Heart right ventricle (tissue), 16 donors: ENCODE measurements at regions of chr15 and their contacts with region 1.

Region 1: DNA sequence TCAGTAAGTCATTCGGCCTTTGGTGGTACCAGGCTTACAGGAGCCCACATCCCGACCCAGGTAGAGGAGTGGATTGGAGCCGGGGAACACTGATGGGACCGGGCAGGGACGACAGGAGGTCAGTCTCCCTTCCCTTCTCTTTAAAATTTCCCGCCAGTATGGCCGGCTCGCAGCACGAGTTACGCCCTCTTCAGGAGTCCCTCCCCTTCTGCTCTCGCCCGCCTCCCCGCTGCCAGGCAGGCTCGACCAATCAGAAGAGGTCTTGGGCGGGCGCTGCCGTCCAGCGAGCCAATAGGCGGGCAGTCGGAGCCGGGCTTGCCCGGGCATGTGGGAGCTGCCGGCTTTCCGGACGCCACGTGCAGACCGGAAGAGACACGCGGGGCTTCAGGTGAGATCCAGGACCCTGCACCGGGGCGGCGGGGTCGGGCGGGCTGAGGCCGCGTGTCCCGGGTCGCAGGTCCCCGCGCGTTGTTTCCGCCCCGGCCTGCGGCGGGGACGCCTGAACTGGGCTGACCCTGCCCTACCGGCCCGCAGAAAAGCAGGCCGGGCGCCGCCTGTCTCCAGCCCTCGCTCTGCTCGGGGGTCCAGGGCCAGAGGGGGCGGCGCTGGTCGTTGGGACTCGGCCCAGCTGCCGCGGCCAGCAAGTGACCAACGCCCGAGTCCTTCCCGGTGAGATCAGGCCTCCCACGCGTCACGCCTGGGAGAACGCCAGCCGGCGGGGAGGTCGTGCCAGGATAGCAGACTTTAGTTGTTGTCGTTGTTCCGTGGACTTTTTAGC is at the start of gene AEN:
- DNase-seq: peak; percentile 95 to 96
- ATAC-seq: peak; percentile 97 to 99 (median 99)
- H3K4me3 ChIP-seq: peak within 1 kb of the TSS; percentile 52 to 96 (median 82)
- H3K27ac ChIP-seq: peak within 1 kb of the TSS; percentile 79 to 94 (median 92)
- H3K4me1 ChIP-seq: peaks cover 6 to 51% (median 36%) of the 10 kb centered on the region in 9 donors
- H3K27me3 ChIP-seq: no peaks in the 10 kb centered on the region
- CTCF ChIP-seq: peak in 5 of 9 donors; percentile 18 to 59 (median 31)
- total RNA-seq, gene AEN: 4.0 to 9.5 (median 5.6) TPM

Region 2: GRCh38 chr15:88401996-88402656 is 219.1 kb before region 1 on chr15:
- intact Hi-C with region 1: no loop called
- DNase-seq: peak; percentile 62 to 64
- ATAC-seq: peak; percentile 60 to 92 (median 80)
- H3K4me3 ChIP-seq: no peak overlapping the region
- H3K27ac ChIP-seq: peak overlapping the region in 9 of 10 donors; percentile 41 to 86 (median 71)
- H3K4me1 ChIP-seq: peaks cover 0 to 26% (median 17%) of the 10 kb centered on the region in 9 donors
- H3K27me3 ChIP-seq: no peaks in the 10 kb centered on the region
- CTCF ChIP-seq: no peak

Region 3: DNA sequence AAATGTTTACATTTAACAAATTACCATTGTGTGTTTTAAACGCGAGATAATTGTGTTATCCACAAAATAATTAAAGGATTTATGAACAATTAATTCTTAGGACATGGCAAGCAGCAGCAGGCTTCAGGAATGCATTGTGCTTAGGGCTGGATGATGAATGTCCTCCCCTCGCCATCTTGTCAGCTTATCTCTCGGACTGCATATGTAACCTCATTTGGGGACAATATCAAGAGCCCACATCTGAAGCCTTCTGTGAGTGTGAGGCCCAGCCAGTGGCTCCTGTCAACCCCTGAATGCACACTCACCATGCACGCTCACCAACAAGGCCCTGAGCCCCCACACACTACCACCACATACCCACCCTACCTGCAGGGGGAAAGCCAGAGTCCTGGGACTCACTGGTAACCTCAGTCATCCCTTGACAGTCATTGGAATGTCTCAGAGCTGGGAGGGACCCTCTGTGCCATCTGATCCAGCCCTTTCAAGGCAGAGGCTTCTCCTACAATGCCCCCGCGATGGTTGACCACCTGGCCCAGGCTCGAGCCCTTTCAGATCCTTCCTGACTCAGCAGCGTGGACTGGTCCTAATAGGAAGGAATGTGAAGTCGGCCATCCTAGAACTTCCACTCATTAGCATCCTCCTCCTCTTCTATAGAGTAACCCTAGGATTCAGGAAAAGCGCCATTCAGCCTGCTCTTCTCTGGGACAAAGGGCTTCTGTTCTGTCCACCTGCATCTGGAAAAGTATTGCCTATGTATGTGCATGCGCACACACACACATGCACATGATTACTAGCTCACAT is 192.2 kb before region 1 on chr15:
- intact Hi-C with region 1: no loop called
- DNase-seq: no peak
- ATAC-seq: no peak
- H3K4me3 ChIP-seq: no peak overlapping the region
- H3K27ac ChIP-seq: no peak overlapping the region
- H3K4me1 ChIP-seq: no peaks in the 10 kb centered on the region
- H3K27me3 ChIP-seq: peaks cover 0 to 35% (median 12%) of the 10 kb centered on the region in 7 donors
- CTCF ChIP-seq: no peak

Region 4: GRCh38 chr15:88638626-88639372 is 17.6 kb after region 1 on chr15 and contains the start of gene ISG20:
- intact Hi-C with region 1: loop called in 1 of 10 experiments (anchors 1 kb)
- DNase-seq: peak; percentile 84 to 88
- ATAC-seq: peak; percentile 87 to 96 (median 94)
- H3K4me3 ChIP-seq: peak within 1 kb of the TSS; percentile 11 to 63 (median 52)
- H3K27ac ChIP-seq: peak within 1 kb of the TSS; percentile 62 to 96 (median 89)
- H3K4me1 ChIP-seq: peaks cover 12 to 80% (median 22%) of the 10 kb centered on the region in 9 donors
- H3K27me3 ChIP-seq: no peaks in the 10 kb centered on the region
- CTCF ChIP-seq: peak in 6 of 9 donors; percentile 24 to 62 (median 50)
- total RNA-seq, gene ISG20: 2.0 to 23.0 (median 4.5) TPM

Region 5: GRCh38 chr15:88664151-88664778 is 43.1 kb after region 1 on chr15:
- intact Hi-C with region 1: loop called in 1 of 10 experiments (anchors 5 kb)
- DNase-seq: no peak
- ATAC-seq: peak in 2 of 8 donors; percentile 35 to 51
- H3K4me3 ChIP-seq: no peak overlapping the region
- H3K27ac ChIP-seq: no peak overlapping the region
- H3K4me1 ChIP-seq: peaks cover 0 to 9% (median 4%) of the 10 kb centered on the region in 9 donors
- H3K27me3 ChIP-seq: peaks cover 0 to 3% (median 0%) of the 10 kb centered on the region in 7 donors
- CTCF ChIP-seq: peak in 7 of 9 donors; percentile 17 to 52 (median 34)

Region 6: GRCh38 chr15:88681610-88682221 is 60.5 kb after region 1 on chr15:
- intact Hi-C with region 1: no loop called
- DNase-seq: no peak
- ATAC-seq: peak in 4 of 8 donors; percentile 11 to 47 (median 25)
- H3K4me3 ChIP-seq: no peak overlapping the region
- H3K27ac ChIP-seq: no peak overlapping the region
- H3K4me1 ChIP-seq: peaks cover 0 to 3% (median 0%) of the 10 kb centered on the region in 9 donors
- H3K27me3 ChIP-seq: peaks cover 0 to 3% (median 0%) of the 10 kb centered on the region in 7 donors
- CTCF ChIP-seq: no peak

Region 7: GRCh38 chr15:88701561-88702095 is 80.4 kb after region 1 on chr15:
- intact Hi-C with region 1: no loop called
- DNase-seq: no peak
- ATAC-seq: no peak
- H3K4me3 ChIP-seq: no peak overlapping the region
- H3K27ac ChIP-seq: no peak overlapping the region
- H3K4me1 ChIP-seq: peaks cover 0 to 11% (median 5%) of the 10 kb centered on the region in 9 donors
- H3K27me3 ChIP-seq: peaks cover 0 to 27% (median 17%) of the 10 kb centered on the region in 7 donors
- CTCF ChIP-seq: peak in 2 of 9 donors; percentile 10 to 16

Region 8: DNA sequence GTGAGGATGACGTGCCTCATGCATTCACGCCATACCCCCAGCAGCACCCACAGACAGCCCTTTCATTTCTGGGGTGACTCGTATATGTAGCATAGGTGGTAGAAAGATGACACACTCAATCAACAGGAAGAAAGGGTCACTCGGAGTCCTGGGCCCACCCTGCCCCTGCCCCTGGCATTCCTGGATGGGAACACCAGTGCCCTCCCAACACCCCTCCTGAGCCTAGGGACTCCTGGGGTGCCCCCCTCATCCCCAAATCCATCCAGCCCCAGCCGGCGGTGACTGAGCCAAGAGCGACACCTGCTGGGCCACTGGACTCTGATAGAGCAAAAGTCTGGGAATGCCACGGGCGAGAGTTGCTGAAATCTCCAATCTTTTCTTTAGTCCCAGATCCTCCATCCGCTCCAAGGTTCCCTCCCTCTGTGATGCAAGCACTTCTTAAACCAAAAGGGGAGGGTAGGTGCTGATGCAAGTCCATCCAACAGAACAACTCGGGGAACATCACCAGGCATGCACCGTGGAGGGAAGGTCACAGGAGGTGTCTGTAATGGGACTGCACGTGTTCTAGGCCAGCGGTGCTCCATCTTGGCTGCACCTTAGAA is 213.1 kb after region 1 on chr15:
- intact Hi-C with region 1: loop called in 2 of 10 experiments (anchors 2 to 10 kb)
- DNase-seq: peak; percentile 30 to 44
- ATAC-seq: peak; percentile 44 to 82 (median 65)
- H3K4me3 ChIP-seq: no peak overlapping the region
- H3K27ac ChIP-seq: no peak overlapping the region
- H3K4me1 ChIP-seq: no peaks in the 10 kb centered on the region
- H3K27me3 ChIP-seq: peaks cover 0 to 7% (median 0%) of the 10 kb centered on the region in 7 donors
- CTCF ChIP-seq: peak in 8 of 9 donors; percentile 43 to 74 (median 64)

Region 9: GRCh38 chr15:88897456-88898194 is 276.4 kb after region 1 on chr15:
- intact Hi-C with region 1: loop called in 4 of 10 experiments (anchors 2 to 10 kb)
- DNase-seq: peak; percentile 86 to 91
- ATAC-seq: peak; percentile 80 to 96 (median 92)
- H3K4me3 ChIP-seq: peak overlapping the region in 1 of 10 donors; percentile 33
- H3K27ac ChIP-seq: peak overlapping the region; percentile 37 to 91 (median 78)
- H3K4me1 ChIP-seq: peaks cover 27 to 81% (median 47%) of the 10 kb centered on the region in 9 donors
- H3K27me3 ChIP-seq: peaks cover 0 to 24% (median 0%) of the 10 kb centered on the region in 7 donors
- CTCF ChIP-seq: peak; percentile 59 to 92 (median 74)

Region 10: DNA sequence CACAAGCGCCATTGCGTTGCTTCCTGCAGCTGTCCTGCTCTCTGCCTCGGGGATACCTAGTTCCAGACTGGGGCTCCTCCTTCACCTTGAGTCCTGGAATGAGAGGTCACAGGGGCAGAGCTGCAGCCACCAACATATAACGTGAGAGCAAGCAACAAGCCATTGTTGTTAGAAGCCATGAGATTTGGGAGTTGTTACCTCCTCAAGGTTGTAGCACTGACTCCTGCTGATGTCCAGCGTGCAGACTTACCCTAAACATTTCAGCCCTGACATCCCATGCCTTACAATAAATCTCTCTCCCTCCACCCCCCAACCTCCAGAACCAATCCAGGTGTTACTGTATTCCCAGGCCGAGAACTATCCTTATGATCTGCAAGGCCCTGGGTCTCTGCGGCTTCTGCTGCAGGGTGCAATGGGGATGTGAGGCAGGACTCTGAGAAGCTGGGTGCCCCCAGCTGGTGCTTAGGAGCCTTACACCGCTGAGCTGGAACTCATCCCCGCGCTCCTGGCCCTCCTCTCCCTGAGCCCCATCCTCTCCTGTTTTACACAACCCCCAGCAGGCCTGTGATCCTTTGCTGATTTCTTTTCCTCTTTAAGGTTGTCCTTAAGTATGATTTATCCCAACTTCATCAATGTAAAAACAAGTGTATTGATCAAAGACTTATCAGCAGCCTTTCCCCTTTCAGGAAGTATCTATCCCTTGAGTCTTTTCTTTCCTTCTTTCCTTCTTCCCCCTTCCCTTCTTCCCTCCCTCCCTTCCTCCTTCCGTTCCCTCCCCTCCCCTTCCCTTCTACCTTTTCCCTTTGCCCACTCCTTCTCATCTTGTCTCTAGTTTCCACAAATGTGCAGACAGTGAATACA is 382.9 kb after region 1 on chr15:
- intact Hi-C with region 1: loop called in 1 of 10 experiments (anchors 10 kb)
- DNase-seq: peak; percentile 44 to 45
- ATAC-seq: peak; percentile 79 to 90 (median 84)
- H3K4me3 ChIP-seq: no peak overlapping the region
- H3K27ac ChIP-seq: no peak overlapping the region
- H3K4me1 ChIP-seq: peaks cover 3 to 33% (median 13%) of the 10 kb centered on the region in 9 donors
- H3K27me3 ChIP-seq: no peaks in the 10 kb centered on the region
- CTCF ChIP-seq: peak; percentile 26 to 71 (median 64)